Vagina (tissue), 2 donors: ENCODE measurements at regions of chr5 and their contacts with region 1.

Region 1: GRCh38 chr5:170420780-170421412 is 31.7 kb upstream of the KCNMB1 start:
- DNase-seq: no peak
- H3K4me3 ChIP-seq: no peak overlapping the region
- H3K27ac ChIP-seq: no peak overlapping the region
- H3K4me1 ChIP-seq: no peaks in the 10 kb centered on the region
- H3K27me3 ChIP-seq: no peaks in the 10 kb centered on the region
- CTCF ChIP-seq: peak; percentile 57 to 69 (median 68)
- POLR2A ChIP-seq: no peak

Region 2: DNA sequence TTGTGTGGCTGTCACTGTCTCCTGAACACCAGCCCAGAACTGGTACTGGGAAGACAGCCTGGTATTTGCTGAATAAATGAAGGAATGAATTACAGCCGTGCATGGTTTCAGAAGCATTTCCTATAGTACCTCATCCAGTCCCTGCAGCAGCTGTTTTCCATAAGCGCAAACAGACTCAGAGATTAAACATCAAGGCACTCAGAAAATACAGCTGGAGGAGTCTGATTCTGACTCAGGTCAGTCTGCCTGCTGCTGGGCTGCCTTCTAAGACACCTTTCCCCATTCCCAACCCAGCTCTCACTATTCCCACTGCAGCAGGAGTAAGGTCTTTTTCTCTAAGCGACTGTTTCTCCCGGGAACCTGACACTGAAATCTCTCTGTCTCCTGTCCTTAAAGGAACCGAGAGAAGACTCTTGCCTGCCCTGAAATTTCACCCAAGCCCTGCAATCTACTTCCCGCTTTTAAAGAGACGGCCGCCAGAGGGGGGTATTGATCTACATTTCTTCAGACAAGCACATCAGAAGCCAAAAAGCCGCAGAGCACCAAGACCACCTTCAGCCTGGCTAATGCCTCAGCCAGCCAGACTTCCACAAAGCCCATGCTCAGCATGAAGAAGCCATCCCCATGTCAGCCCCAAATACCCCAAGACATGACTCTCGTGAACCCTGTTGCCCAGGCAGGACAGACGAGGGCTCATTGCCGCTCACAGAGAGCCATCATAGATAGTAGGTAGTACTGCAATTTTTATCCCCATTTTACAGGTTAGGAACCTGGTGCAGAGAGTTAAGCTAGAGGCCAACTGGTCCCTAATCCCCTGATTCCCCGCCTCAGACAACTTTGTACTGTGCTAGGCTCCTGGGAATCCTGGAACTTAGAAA is 320.6 kb before region 1 on chr5:
- intact Hi-C with region 1: loop called (anchors 10 kb)
- DNase-seq: no peak
- H3K4me3 ChIP-seq: no peak overlapping the region
- H3K27ac ChIP-seq: no peak overlapping the region
- H3K4me1 ChIP-seq: no peaks in the 10 kb centered on the region
- H3K27me3 ChIP-seq: no peaks in the 10 kb centered on the region
- CTCF ChIP-seq: peak; percentile 22 to 65 (median 44)
- POLR2A ChIP-seq: no peak

Region 3: DNA sequence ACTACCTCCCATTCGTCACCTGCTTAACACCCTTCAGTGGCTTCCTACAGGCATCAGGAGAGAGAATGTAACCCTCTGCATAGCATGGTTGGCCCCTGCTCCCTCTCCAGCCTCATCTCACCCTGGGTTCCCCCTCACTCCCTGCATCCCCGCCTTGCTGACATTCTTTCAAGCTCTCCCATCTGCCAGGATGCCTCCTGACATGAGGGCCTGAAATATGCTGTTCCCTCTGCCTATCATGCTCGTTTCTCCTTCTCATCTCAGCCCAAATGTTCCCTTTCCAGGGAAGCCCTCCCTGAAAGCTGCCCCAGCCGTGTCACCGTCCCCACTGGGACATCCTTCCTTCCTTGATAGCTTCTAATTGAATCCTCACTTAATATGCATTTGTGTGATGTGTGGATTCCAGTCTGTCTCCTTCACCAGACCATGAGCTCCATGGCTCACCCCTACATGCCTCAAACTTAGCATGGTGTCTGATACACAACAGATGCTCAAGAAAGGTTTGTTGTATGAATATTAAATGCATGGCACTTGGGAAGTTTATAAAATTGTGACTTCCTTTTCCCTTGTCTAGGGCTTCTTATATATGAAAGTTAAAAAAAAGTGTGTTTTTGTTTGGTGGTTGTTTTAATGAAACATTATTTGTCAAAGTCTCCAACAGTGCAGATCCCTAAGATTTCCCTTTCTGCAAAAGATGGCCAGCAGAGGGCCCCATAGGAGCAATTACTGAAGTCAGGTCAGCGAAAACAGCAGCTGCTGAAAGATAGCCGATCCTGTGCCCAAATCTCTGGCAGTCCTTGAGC is 195.4 kb before region 1 on chr5:
- intact Hi-C with region 1: loop called (anchors 10 kb)
- DNase-seq: no peak
- H3K4me3 ChIP-seq: no peak overlapping the region
- H3K27ac ChIP-seq: no peak overlapping the region
- H3K4me1 ChIP-seq: no peaks in the 10 kb centered on the region
- H3K27me3 ChIP-seq: no peaks in the 10 kb centered on the region
- CTCF ChIP-seq: peak; percentile 54 to 75 (median 63)
- POLR2A ChIP-seq: no peak

Region 4: DNA sequence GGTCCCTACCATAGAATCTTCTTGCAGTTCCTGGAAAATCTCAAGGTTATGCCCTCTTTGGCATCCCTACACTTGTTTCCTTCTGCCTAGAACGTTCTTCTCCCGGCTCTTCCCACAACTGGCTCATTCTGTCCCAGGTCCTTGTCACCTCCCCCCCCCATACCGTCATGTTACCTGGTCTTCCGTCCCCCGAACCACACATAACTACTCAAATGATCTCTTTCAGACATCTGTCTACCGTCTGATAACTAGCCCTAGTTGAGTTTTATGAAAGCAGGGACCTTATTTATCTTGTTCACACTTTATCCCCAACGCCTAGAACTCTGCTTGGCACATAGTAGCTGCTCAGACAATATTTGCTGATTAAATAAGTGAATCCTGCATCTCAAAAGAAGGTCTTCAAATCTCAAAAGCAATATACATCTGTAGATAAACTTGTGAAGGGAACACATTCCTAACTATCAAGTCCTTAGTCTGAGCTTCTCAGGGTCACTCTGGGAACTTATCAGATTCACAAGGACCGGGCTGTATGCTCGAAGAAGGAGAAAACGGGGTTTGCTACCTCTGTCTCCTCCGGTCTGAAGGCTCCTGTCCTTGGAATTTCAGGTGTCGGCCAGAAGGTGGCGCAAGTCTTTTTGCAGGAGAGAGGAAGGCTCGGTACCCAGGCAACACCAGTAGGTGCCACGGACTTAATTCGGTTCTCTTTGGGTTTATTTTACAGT is 153.3 kb before region 1 on chr5:
- intact Hi-C with region 1: loop called (anchors 10 kb)
- DNase-seq: peak in 1 of 2 donors; percentile 60
- H3K4me3 ChIP-seq: no peak overlapping the region
- H3K27ac ChIP-seq: peak overlapping the region; percentile 58
- H3K4me1 ChIP-seq: peaks cover 25% of the 10 kb centered on the region
- H3K27me3 ChIP-seq: no peaks in the 10 kb centered on the region
- CTCF ChIP-seq: peak; percentile 25 to 82 (median 77)
- POLR2A ChIP-seq: no peak

Region 5: GRCh38 chr5:171162602-171163001 is 741.7 kb after region 1 on chr5:
- intact Hi-C with region 1: no loop called
- DNase-seq: no peak
- H3K4me3 ChIP-seq: no peak overlapping the region
- H3K27ac ChIP-seq: no peak overlapping the region
- H3K4me1 ChIP-seq: no peaks in the 10 kb centered on the region
- H3K27me3 ChIP-seq: no peaks in the 10 kb centered on the region
- CTCF ChIP-seq: no peak
- POLR2A ChIP-seq: no peak